Calu3 (cell line): ENCODE measurements at regions of chr14 and their contacts with region 1.

Region 1: DNA sequence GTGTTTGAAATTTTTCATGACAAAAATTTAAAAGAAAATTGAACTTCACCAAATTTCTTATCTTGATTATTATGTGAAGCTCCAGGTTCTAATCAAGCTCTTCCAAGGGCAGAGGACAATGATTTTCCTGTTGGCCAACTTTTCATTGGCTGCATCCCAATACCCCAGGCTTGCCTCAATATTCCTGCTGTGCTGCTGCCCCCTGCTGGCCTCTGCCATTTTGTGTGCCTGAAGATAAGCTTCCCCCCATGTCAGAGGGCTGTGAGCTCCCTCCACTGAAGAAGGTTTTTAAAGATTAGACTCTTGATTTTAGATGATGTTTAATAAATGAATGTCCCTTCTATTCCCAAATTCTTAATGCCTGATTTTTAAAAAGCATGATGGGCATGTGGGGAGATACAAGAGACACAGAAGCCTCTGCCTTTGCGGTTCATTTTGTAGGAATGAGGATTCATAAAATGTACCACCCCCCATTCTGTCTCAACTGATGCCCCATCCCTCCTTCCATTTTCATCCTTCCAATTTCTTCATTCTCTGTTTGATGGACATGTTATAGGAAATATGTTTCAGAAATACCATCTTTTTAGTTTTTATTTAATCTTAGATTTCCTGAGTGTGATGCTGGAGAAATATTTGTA is 76.7 kb upstream of the RGS6 start:
- DNase-seq: peak; percentile 86
- H3K4me3 Mint-ChIP-seq: no peak overlapping the region
- H3K27ac Mint-ChIP-seq: no peak overlapping the region
- H3K4me1 Mint-ChIP-seq: no peaks in the 10 kb centered on the region
- H3K27me3 Mint-ChIP-seq: peaks cover 30% of the 10 kb centered on the region
- CTCF ChIP-seq: peak; percentile 64

Region 2: DNA sequence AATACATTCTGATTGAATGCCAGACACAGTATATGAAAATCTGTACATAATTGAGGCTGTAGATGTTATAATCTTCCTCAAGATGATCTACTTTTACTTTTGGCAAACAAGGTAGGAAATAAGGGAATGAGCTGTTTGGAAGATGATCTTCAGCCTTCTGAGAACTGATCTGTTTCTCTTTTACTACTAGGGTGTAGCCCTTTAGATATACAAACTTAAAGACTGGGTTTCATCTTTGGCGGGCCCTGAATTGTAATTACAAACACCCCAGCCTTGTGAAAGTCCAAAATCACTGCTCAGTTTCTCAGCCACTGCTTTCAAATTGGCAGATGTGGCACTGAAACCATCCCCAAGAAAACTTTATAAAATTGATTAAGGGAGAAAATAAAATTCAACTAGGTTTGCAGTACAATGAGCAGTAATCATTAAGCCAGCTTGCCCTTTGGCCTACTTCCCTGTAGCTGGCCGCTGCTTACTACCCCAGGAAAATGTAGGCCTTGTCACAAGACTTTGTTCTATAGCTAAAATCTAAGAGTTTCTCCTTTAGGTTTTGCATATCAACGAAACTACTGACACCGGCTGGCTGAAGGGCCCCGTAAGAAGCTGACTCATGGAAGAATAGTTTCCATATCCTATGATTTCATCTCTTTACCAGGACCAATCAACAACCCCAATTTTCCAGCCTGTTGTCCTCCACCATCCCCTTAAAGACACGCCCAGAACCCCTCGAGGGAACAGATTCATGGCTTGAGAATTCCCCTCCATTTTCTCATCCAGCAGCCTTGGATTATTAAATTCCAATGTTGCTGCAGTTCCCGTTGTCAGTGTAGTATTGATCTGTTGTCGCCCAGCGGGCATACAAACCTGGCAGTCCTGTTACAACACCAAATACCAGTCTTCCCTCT is 737.4 kb before region 1 on chr14:
- CTCF ChIA-PET with region 1: no interaction called
- intact Hi-C with region 1: loop called (anchors 10 kb)
- DNase-seq: peak; percentile 68
- H3K4me3 Mint-ChIP-seq: peak overlapping the region; percentile 49
- H3K27ac Mint-ChIP-seq: peak overlapping the region; percentile 92
- H3K4me1 Mint-ChIP-seq: peaks cover 36% of the 10 kb centered on the region
- H3K27me3 Mint-ChIP-seq: no peaks in the 10 kb centered on the region
- CTCF ChIP-seq: no peak

Region 3: GRCh38 chr14:71720978-71721624 is 134.4 kb before region 1 on chr14:
- CTCF ChIA-PET with region 1: interaction called, 9 read pairs
- intact Hi-C with region 1: loop called (anchors 1 kb)
- DNase-seq: peak; percentile 64
- H3K4me3 Mint-ChIP-seq: no peak overlapping the region
- H3K27ac Mint-ChIP-seq: no peak overlapping the region
- H3K4me1 Mint-ChIP-seq: no peaks in the 10 kb centered on the region
- H3K27me3 Mint-ChIP-seq: no peaks in the 10 kb centered on the region
- CTCF ChIP-seq: peak; percentile 36

Region 4: GRCh38 chr14:72554994-72555604 is 699.6 kb after region 1 on chr14:
- CTCF ChIA-PET with region 1: no interaction called
- intact Hi-C with region 1: no loop called
- DNase-seq: no peak
- H3K4me3 Mint-ChIP-seq: no peak overlapping the region
- H3K27ac Mint-ChIP-seq: no peak overlapping the region
- H3K4me1 Mint-ChIP-seq: peaks cover 8% of the 10 kb centered on the region
- H3K27me3 Mint-ChIP-seq: peaks cover 86% of the 10 kb centered on the region
- CTCF ChIP-seq: no peak